Endothelial cell of umbilical vein (primary cell): ENCODE measurements at regions of chr17 and their contacts with region 1.

Region 1: DNA sequence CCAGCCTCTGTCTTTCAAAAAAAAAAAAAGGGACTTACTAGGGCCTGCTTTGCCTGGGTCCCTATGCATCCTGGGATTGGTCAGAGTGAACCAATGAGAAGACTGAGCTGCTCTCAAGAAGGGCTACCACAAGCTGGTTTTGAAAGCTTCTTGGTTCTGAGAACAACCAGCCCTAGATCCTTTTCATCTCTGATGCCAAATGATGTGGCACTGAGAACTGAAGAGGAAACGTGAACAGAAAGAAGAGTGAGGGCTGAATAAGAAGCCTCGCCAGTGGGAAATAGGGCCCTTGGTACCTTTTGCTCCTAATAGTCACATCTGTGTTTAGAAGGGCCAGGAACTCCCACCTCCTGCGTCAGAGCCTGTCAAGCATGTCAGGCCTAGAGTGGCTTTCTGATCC is 10.7 kb downstream of the TACO1 start:
- DNase-seq: no peak
- H3K4me3 ChIP-seq: no peak overlapping the region
- H3K27ac ChIP-seq: no peak overlapping the region
- H3K4me1 ChIP-seq: no peaks in the 10 kb centered on the region
- H3K27me3 ChIP-seq: no peaks in the 10 kb centered on the region
- CTCF ChIP-seq: no peak
- POLR2A ChIP-seq: no peak

Region 2: DNA sequence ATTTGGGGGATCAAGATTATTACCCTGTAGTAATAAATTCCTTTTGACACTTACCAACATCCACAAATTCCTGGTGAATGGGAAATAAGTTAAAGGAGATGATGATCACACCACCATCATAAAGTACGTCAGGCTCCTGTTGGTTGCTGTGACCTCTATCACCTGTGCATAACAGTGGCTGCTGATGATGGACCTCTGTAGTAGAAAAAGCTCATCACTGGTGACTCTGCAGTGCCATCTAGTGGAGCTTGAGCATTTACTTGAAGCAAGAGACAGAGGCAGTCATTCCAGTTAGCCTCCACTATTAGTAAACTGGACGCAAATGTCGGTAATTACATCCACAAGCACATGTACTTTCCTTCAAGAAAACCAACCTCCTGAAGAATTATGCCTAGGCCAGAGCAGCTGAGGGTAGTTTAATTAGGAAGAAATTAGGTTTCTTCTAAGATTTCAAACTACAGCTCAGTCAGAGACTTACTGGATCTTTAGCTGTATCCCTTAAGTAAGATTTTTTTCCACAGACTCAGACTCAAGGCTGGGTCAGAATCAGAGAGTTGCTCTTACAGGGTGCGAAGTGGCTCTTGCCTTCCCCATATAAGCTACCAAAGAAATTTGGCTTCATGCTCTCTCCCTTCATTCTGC is 204.5 kb before region 1 on chr17:
- CTCF ChIA-PET with region 1: interaction called, 27 read pairs
- POLR2A ChIA-PET with region 1: no interaction called
- dilution Hi-C with region 1: no loop called
- intact Hi-C with region 1: no loop called
- DNase-seq: peak; percentile 87
- H3K4me3 ChIP-seq: no peak overlapping the region
- H3K27ac ChIP-seq: no peak overlapping the region
- H3K4me1 ChIP-seq: peaks cover 4% of the 10 kb centered on the region
- H3K27me3 ChIP-seq: no peaks in the 10 kb centered on the region
- CTCF ChIP-seq: peak; percentile 74 to 77
- POLR2A ChIP-seq: no peak

Region 3: DNA sequence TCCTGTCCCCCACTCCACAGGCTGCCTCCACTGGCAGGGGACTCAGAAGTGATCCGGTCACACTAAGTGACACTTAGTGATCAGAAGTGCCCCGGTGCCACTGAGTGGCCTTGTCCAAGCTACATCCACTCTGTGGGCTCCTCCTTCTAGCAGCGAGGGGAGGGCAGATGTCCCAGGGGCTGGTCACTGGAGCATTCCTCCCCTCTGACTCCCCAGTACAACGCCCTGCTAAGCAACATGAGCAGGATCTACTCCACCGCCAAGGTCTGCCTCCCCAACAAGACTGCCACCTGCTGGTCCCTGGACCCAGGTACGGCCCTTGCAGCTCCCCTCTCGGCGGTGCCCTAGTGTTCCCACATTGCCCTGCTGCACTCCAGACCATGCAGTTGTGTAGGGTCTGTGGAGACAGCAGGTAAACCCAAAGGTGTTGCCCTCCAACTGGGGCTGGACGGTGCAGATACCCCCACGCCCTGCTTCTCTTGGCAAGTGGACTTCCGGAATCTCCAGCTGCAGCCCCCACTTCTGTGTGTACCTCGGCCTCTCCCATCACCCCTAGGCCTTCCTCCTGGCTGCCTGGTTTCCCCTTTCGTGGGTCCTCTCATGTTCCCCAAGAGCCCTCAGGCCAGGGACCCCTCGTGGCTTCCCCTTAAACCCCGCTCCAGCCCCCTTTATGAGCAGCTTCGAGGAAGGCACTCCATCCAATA is 132.4 kb before region 1 on chr17:
- CTCF ChIA-PET with region 1: interaction called, 52 read pairs
- POLR2A ChIA-PET with region 1: no interaction called
- dilution Hi-C with region 1: no loop called
- intact Hi-C with region 1: loop called (anchors 1 kb)
- DNase-seq: peak; percentile 81
- H3K4me3 ChIP-seq: peak overlapping the region in 1 of 3 experiments; percentile 62
- H3K27ac ChIP-seq: no peak overlapping the region
- H3K4me1 ChIP-seq: peaks cover 27% of the 10 kb centered on the region
- H3K27me3 ChIP-seq: no peaks in the 10 kb centered on the region
- CTCF ChIP-seq: peak; percentile 87 to 96
- POLR2A ChIP-seq: no peak

Region 4: DNA sequence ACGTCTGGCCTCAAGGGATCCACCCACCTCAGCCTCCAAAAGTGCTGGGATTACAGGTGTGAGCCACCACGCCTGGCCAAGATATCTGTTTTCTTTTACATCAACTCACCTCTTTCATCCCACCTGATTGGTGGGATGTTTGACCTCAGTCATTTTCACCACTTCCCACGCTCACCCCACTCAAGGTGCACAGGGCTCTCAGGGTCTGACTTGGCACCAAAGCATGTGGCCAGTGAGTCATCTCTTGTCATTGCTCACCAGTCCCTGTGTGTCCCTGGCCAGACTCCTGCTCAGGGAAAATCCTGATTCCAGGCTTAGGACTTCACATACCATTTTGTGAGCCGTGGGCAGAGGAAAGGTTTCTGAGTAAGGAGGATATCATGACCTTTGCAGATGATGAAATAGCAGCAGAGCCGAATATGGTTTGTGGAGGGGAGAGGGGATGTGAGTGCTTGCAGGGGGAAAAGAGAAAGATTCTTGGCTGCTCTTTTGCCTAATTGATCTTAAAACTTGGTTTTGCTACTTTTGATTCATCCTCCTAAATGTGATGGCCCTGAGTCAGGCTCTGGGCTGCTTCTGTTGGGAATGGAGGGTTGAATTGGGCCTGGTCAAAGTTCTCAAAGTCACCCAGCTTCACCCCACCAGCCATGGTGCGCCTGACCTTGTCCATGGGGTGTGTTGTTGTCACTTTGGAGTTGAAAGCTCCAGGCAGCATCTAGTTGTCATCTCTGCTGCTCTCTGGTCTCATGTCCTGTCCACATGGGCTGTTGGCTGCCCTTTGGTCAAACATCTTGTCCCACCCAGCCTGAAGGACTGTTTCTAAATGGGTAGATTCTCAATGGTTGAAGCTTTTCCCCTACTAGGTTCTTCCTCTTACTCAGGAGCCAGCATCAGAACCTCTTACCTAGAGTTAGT is 94.2 kb before region 1 on chr17:
- CTCF ChIA-PET with region 1: no interaction called
- POLR2A ChIA-PET with region 1: no interaction called
- dilution Hi-C with region 1: no loop called
- intact Hi-C with region 1: no loop called
- DNase-seq: no peak
- H3K4me3 ChIP-seq: no peak overlapping the region
- H3K27ac ChIP-seq: no peak overlapping the region
- H3K4me1 ChIP-seq: no peaks in the 10 kb centered on the region
- H3K27me3 ChIP-seq: peaks cover 7 to 8% of the 10 kb centered on the region in 2 experiments
- CTCF ChIP-seq: no peak
- POLR2A ChIP-seq: no peak

Region 5: GRCh38 chr17:63549946-63550807 is 61.2 kb before region 1 on chr17 and contains the start of gene DCAF7:
- CTCF ChIA-PET with region 1: interaction called, 10 read pairs
- POLR2A ChIA-PET with region 1: no interaction called
- dilution Hi-C with region 1: no loop called
- intact Hi-C with region 1: no loop called
- DNase-seq: peak; percentile 100
- H3K4me3 ChIP-seq: peak within 1 kb of the TSS; percentile 42 to 77 (median 64)
- H3K27ac ChIP-seq: peak within 1 kb of the TSS; percentile 42
- H3K4me1 ChIP-seq: peaks cover 14% of the 10 kb centered on the region
- H3K27me3 ChIP-seq: no peaks in the 10 kb centered on the region
- CTCF ChIP-seq: no peak
- POLR2A ChIP-seq: peak; percentile 74
- total RNA-seq, gene DCAF7: 89.6 and 100 TPM in 2 replicates

Region 6: GRCh38 chr17:63592797-63593472 is 18.4 kb before region 1 on chr17:
- CTCF ChIA-PET with region 1: interaction called, 13 read pairs
- POLR2A ChIA-PET with region 1: no interaction called
- dilution Hi-C with region 1: no loop called
- intact Hi-C with region 1: no loop called
- DNase-seq: no peak
- H3K4me3 ChIP-seq: no peak overlapping the region
- H3K27ac ChIP-seq: no peak overlapping the region
- H3K4me1 ChIP-seq: peaks cover 15% of the 10 kb centered on the region
- H3K27me3 ChIP-seq: no peaks in the 10 kb centered on the region
- CTCF ChIP-seq: no peak
- POLR2A ChIP-seq: no peak

Region 7: GRCh38 chr17:63634163-63634562 is 22.8 kb after region 1 on chr17:
- CTCF ChIA-PET with region 1: interaction called, 11 read pairs
- POLR2A ChIA-PET with region 1: no interaction called
- dilution Hi-C with region 1: no loop called
- intact Hi-C with region 1: no loop called
- DNase-seq: peak; percentile 83
- H3K4me3 ChIP-seq: peak overlapping the region in 1 of 3 experiments; percentile 60
- H3K27ac ChIP-seq: peak overlapping the region; percentile 79
- H3K4me1 ChIP-seq: peaks cover 36% of the 10 kb centered on the region
- H3K27me3 ChIP-seq: no peaks in the 10 kb centered on the region
- CTCF ChIP-seq: no peak
- POLR2A ChIP-seq: no peak